Right ventricle myocardium inferior (tissue), 1 donor: ENCODE measurements at regions of chr13 and their contacts with region 1.

Region 1: DNA sequence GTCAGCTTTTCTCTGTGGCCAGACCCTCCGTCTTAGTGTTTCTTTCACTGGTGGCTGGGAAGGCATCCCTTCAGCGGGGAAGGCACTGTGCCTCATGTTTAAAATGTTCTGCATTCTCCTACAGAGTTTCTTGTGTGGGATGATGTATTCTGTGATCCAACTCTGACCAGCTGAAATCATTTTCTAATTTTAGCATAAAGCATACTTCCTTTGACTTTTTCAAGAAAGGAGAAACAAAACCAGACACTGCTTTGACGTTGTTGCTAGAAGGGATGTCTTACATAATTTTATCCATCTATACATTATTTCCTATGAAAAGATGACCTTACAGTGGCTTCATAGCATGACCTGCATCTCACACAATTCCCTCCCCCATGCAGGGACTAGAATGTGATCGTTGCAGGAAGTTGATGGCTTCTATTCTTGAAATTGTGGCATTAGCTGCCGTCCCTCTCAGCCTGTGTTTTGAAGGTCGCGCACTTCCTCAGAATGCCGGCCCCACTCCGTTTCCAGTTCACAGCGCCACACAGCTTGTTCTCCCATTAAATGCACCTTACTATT is 38.6 kb upstream of the TEX29 start:
- DNase-seq: no peak
- ATAC-seq: peak; percentile 20

Region 2: DNA sequence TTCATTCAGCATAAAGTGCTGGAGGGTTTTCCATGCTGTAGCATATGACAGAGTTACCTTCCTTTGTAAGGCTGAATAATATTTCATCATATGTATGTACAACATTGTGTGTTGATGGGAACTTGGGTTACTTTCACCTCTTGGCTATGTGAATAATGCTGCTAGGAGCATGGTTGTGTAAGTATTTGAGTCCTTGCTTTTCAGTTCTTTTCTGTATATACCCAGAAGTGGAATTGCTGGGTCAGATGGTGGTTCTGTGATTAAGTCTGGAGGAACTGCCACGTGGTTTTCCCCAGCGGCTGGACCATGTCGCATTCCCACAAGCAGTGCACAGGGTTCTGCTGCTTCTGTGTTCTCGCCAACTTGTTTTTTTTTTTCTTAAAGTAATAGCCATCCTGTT is 62.6 kb before region 1 on chr13:
- intact Hi-C with region 1: no loop called
- DNase-seq: no peak
- ATAC-seq: peak; percentile 66

Region 3: DNA sequence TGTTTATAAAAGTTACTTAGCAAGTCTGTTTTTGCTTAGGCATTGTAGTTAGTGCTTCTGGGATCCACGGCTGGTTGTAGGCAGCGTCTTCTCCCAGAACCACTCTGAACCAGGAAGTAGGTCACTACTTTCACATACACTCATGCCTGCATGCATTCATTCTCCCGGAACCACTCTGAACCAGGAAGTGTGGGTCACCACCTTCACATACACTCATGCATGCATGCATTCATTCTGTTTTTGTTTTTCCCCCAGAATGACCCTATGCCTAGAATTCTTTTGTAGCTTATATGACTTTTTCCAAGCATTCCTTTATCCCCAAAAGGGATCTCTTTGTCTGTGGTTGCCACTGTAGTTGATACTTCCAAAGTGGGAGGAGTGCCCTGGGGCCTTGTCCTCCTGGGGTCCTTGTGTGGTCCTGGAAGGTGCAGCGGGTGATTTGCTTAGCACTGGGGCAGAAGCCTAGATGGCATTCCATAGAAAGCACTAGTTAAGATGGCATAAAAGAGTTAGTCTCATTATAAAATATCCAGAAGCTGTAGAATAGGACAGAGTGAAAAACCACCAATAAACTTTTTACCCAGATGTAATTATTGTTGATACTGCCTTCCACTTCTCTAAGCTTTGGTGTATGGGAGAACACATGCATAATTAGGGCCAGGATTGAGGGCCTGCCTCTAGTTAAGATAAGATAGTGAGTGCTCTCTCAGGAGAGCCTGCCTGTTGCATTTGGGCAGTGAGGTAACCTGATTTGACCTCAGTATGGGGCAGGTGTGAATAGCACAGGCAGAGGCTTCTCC is 30.0 kb before region 1 on chr13:
- intact Hi-C with region 1: loop called (anchors 2 kb)
- DNase-seq: no peak
- ATAC-seq: peak; percentile 68